ENCODE measurements at regions of chr12 and their contacts with region 1.

Region 1: GRCh38 chr12:124767066-124767821 is 96.4 kb downstream of the SCARB1 start:
- DNase-seq: peak; percentile 85
- H3K4me3 ChIP-seq: no peak overlapping the region
- H3K27ac ChIP-seq: peak overlapping the region; percentile 85
- H3K4me1 ChIP-seq: peaks cover 39% of the 10 kb centered on the region
- H3K27me3 ChIP-seq: peaks cover 2% of the 10 kb centered on the region
- CTCF ChIP-seq: peak; percentile 100

Region 2: GRCh38 chr12:124036674-124037109 is 730.6 kb before region 1 on chr12:
- intact Hi-C with region 1: loop called (anchors 5 kb)
- DNase-seq: no peak
- H3K4me3 ChIP-seq: no peak overlapping the region
- H3K27ac ChIP-seq: no peak overlapping the region
- H3K4me1 ChIP-seq: peaks cover 10% of the 10 kb centered on the region
- H3K27me3 ChIP-seq: no peaks in the 10 kb centered on the region
- CTCF ChIP-seq: peak; percentile 92

Region 3: DNA sequence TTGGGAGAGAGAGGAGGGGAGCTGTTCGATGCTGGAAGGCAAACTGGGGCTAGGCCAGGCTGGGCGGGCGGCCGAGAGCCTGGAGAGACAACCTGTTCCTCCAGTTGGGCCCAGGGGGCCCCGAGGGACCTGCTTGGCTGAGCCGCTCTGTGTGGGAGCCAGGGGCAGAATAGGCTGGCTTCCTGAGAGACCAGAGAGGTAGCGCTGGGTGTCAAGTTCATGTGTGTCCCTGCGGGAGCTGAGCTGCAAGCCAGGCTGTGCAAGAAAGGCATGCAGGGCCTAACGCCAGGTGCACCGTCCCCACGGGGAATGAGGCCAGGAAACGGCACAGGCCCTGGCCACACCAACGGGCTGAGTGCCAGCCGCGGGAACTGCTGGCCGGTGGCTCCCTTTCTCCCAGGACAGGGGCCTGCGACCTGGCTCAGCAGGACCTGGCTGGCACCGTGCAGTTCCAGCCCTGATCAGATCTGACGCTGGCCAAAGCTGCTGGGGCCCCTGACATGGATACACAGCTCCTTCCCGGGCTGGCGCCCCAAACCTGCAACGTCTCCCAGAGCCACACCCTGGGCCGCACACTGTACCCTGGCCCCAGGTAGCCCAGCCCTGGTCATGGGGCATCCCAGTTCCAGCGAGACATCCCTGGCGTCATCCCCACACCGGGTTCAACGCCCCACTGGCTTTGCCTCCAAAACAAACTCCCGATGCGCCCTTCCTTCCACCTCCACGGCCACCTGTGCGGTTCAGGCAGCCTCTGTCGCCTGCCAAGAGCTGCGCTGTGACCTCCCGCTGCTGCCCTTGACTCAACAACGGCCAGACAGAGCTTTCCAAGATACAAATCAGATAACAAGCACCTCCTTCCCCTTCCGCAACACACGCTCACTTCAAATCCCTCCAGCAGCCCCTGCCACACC is 407.3 kb before region 1 on chr12:
- intact Hi-C with region 1: loop called (anchors 10 kb)
- DNase-seq: peak; percentile 95
- H3K4me3 ChIP-seq: no peak overlapping the region
- H3K27ac ChIP-seq: peak overlapping the region; percentile 91
- H3K4me1 ChIP-seq: peaks cover 76% of the 10 kb centered on the region
- H3K27me3 ChIP-seq: no peaks in the 10 kb centered on the region
- CTCF ChIP-seq: no peak

Region 4: DNA sequence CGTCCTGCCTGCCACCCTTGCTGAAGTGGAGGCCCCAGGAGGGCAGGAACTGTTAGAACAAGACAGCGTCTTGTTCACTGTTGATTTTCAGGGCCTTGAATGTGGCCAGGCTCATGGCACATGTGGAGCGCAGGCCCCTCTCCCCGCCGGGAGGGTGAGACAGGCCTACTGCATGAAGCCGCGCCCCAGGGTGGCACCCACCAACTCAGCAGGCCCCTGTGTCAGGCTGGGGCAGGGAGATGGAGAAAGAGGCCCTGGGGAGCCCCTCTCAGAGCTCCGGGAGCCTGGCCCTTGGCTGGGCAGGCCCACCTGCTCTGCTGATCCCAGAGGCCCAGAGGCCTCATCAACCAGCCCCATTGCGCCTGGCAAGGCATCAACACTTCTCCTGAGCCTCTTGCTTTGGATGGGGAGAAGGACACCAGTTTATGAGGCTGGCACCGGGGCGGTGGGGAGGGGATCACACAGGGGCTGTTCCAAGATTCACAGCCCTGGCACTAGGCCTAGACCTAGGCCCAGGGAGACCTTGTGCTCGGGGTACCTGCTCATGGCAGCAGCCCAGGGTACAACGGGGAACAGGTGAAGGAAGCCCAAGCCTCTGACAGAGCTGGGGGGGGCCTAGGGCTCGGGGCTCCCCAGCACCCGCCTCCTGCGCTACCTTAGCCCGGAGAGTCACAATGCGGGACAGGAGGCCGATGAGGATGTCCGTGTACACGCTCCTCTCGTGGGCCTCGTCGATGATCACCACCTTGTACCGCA is 203.6 kb after region 1 on chr12:
- intact Hi-C with region 1: no loop called
- DNase-seq: no peak
- H3K4me3 ChIP-seq: no peak overlapping the region
- H3K27ac ChIP-seq: no peak overlapping the region
- H3K4me1 ChIP-seq: no peaks in the 10 kb centered on the region
- H3K27me3 ChIP-seq: no peaks in the 10 kb centered on the region
- CTCF ChIP-seq: no peak

Measured in left ventricle myocardium inferior (tissue), 1 donor.